Calu3 (cell line): ENCODE measurements at regions of chr1 and their contacts with region 1.

Region 1: GRCh38 chr1:56831871-56832693 is 12.9 kb upstream of the FYB2 start:
- DNase-seq: peak; percentile 77
- H3K4me3 Mint-ChIP-seq: no peak overlapping the region
- H3K27ac Mint-ChIP-seq: no peak overlapping the region
- H3K4me1 Mint-ChIP-seq: no peaks in the 10 kb centered on the region
- H3K27me3 Mint-ChIP-seq: peaks cover 42% of the 10 kb centered on the region
- CTCF ChIP-seq: peak; percentile 91

Region 2: GRCh38 chr1:56967900-56968832 is 136.1 kb after region 1 on chr1:
- CTCF ChIA-PET with region 1: no interaction called
- intact Hi-C with region 1: loop called (anchors 2 kb)
- DNase-seq: peak; percentile 41
- H3K4me3 Mint-ChIP-seq: no peak overlapping the region
- H3K27ac Mint-ChIP-seq: no peak overlapping the region
- H3K4me1 Mint-ChIP-seq: no peaks in the 10 kb centered on the region
- H3K27me3 Mint-ChIP-seq: no peaks in the 10 kb centered on the region
- CTCF ChIP-seq: peak; percentile 42

Region 3: DNA sequence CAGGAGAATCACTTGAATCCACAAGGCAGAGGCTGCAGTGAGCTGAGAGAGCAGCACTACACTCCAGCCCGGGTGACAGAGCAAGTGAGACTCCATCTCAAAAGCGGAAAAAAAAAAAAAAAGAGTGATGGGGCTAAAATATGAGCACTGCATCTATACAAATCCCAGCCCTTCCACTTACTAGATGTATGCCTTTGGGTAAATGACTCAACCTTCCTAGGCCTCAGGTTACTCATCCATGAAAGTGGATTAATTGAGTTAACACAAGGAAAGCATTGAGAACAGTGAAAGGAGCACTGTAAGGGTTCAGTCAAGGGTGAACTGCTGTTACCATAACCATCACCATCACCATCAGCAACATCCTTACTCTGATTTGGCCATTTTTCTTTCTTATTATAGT is 360.1 kb after region 1 on chr1:
- CTCF ChIA-PET with region 1: no interaction called
- intact Hi-C with region 1: no loop called
- DNase-seq: no peak
- H3K4me3 Mint-ChIP-seq: no peak overlapping the region
- H3K27ac Mint-ChIP-seq: no peak overlapping the region
- H3K4me1 Mint-ChIP-seq: no peaks in the 10 kb centered on the region
- H3K27me3 Mint-ChIP-seq: no peaks in the 10 kb centered on the region
- CTCF ChIP-seq: no peak

Region 4: DNA sequence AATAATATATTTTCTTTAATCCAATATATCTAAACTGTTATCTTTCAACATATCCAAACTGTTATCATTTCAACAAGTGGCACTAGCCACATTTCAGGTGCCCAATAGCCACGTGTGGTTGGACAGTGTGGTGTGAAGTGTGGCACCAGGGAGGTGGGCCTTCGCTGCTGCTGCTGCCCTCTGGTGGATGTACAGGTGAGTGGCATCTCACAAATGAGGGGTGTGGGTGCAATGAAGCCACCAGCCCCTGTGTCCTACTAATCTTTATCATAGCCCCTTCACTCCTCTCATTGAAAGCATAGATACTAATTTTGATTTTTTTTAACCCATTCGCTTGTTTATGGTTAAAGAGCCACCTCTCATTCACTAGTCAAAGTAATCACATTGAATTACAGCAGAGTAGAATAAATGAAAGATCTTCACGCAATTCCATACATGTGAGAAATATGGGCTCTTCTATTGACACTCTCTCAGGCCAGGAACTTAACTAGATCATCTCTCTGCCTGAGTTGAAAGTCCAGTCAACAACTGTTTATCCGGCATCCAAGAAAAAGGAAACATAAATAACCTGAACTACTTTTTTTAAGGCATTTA is 1215.3 kb after region 1 on chr1:
- CTCF ChIA-PET with region 1: no interaction called
- intact Hi-C with region 1: loop called (anchors 10 kb)
- DNase-seq: peak; percentile 53
- H3K4me3 Mint-ChIP-seq: no peak overlapping the region
- H3K27ac Mint-ChIP-seq: no peak overlapping the region
- H3K4me1 Mint-ChIP-seq: peaks cover 6% of the 10 kb centered on the region
- H3K27me3 Mint-ChIP-seq: no peaks in the 10 kb centered on the region
- CTCF ChIP-seq: peak; percentile 83